B cell (primary cell): ENCODE measurements at regions of chr3 and their contacts with region 1.

Region 1: DNA sequence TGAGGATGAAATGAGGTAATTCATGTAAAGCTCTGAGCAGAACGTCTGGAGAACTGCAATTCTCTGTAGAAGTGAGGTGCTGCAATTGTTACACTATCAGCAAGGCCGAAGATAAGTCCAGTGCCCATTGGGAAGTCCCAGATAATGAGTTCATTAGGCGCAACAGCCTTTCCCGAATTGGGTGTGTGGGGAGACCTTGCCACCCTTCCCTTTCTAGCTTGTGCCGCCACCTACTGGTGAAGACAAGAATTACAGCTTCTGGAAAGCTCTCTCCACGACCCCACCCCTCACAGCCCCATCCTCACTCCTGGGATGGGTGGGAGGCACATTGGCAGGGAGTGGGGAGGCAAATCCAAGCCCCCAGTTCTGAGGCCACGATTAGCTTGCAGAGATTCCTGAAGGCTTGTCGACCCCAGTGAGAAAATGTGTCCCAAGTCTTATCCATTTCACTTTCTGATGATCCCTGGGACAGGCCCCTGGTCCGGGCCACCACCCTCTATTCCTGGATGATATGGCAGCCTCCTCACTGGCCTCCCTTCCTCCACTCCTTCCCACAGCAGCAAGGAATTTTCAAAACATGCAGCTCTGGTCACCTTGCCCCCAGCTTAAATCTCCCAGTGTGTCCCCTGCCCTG is 36.4 kb downstream of the FAM3D start:
- DNase-seq: peak; percentile 71
- ATAC-seq: peak; percentile 76
- H3K4me3 ChIP-seq: no peak overlapping the region
- H3K4me3 Mint-ChIP-seq: no peak overlapping the region
- H3K27ac ChIP-seq: no peak overlapping the region
- H3K27ac Mint-ChIP-seq: no peak overlapping the region
- H3K4me1 ChIP-seq: peaks cover 0 to 6% of the 10 kb centered on the region in 2 donors
- H3K4me1 Mint-ChIP-seq: no peaks in the 10 kb centered on the region
- H3K27me3 ChIP-seq: peaks cover 0 to 19% (median 0%) of the 10 kb centered on the region in 4 experiments
- H3K27me3 Mint-ChIP-seq: peaks cover 18% of the 10 kb centered on the region
- CTCF ChIP-seq: peak; percentile 92

Region 2: DNA sequence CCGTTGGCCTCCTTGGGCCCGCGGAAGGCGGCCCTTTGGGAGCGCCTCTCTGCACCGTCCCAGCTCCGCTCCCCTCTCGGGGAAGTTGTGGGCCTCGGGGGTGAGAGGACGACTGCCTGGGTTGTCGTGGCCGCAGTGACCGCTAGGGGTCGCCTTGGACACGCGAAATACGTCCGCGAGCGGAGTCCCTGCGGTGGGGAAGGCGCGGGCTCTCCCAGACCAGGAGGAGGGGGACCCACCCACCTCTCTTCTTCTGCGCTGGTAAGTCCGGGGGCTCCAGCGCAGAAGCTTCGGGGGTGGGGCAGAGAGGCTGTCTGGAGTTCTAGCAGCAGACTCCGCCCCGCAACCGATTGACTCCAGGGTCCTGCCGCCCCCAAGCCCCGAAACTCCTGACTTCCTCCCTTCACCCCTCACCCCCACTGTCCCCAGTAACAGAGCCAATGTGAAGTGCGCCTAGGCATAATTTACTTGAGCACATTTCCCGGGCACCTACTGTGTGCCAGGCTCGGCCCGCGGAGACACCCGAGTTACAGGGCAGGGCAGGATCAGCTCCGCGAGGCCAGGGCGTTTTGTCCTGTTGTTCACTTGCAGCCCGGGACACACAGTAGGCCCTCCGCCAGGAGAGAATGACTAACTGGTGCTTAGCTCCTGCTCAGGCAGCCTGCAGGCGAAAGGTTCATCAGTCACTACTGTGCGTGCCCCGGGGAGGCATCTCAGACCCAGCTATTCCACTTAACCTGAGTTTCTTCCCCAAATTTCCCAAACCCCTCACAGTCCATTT is 452.3 kb before region 1 on chr3:
- CTCF ChIA-PET with region 1: interaction called, 25 read pairs
- POLR2A ChIA-PET with region 1: no interaction called
- intact Hi-C with region 1: no loop called
- DNase-seq: peak; percentile 90
- ATAC-seq: peak; percentile 96
- H3K4me3 ChIP-seq: peak overlapping the region in 4 of 5 experiments; percentile 38 to 66 (median 56)
- H3K4me3 Mint-ChIP-seq: peak overlapping the region; percentile 86
- H3K27ac ChIP-seq: no peak overlapping the region
- H3K27ac Mint-ChIP-seq: peak overlapping the region; percentile 50
- H3K4me1 ChIP-seq: peaks cover 19 to 24% of the 10 kb centered on the region in 2 donors
- H3K4me1 Mint-ChIP-seq: peaks cover 27% of the 10 kb centered on the region
- H3K27me3 ChIP-seq: peaks cover 0 to 8% (median 3%) of the 10 kb centered on the region in 4 experiments
- H3K27me3 Mint-ChIP-seq: no peaks in the 10 kb centered on the region
- CTCF ChIP-seq: peak; percentile 88

Region 3: GRCh38 chr3:58532794-58533220 is 97.4 kb before region 1 on chr3:
- CTCF ChIA-PET with region 1: interaction called, 5 read pairs
- POLR2A ChIA-PET with region 1: no interaction called
- intact Hi-C with region 1: loop called (anchors 1 kb)
- DNase-seq: peak; percentile 89
- ATAC-seq: peak; percentile 99
- H3K4me3 ChIP-seq: no peak overlapping the region
- H3K4me3 Mint-ChIP-seq: no peak overlapping the region
- H3K27ac ChIP-seq: no peak overlapping the region
- H3K27ac Mint-ChIP-seq: peak overlapping the region; percentile 7
- H3K4me1 ChIP-seq: peaks cover 6 to 8% of the 10 kb centered on the region in 2 donors
- H3K4me1 Mint-ChIP-seq: peaks cover 6% of the 10 kb centered on the region
- H3K27me3 ChIP-seq: no peaks in the 10 kb centered on the region
- H3K27me3 Mint-ChIP-seq: no peaks in the 10 kb centered on the region
- CTCF ChIP-seq: peak; percentile 91

Region 4: DNA sequence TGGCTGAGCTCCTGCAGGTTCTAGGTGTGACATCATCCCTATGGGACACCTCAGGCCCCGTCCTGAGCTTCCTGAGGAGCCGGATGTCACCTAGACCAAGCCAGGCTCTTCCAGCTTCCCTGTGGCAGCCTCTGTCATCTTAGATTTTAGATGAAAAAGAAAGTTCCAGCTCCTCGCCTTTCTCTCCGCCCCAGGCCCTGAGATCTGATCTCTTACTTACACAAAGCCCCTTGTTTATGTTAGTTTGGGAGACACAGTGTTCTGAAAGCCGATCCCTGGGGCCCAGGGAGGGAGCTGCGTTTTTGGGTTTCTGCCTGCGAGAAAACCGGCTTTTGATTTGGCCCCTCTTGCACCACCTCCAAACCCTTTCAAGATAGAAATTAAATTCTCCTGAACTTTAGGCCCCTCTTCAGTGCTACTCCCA is 12.8 kb before region 1 on chr3:
- CTCF ChIA-PET with region 1: interaction called, 16 read pairs
- POLR2A ChIA-PET with region 1: no interaction called
- intact Hi-C with region 1: no loop called
- DNase-seq: no peak
- ATAC-seq: no peak
- H3K4me3 ChIP-seq: no peak overlapping the region
- H3K4me3 Mint-ChIP-seq: no peak overlapping the region
- H3K27ac ChIP-seq: no peak overlapping the region
- H3K27ac Mint-ChIP-seq: no peak overlapping the region
- H3K4me1 ChIP-seq: no peaks in the 10 kb centered on the region
- H3K4me1 Mint-ChIP-seq: no peaks in the 10 kb centered on the region
- H3K27me3 ChIP-seq: no peaks in the 10 kb centered on the region
- H3K27me3 Mint-ChIP-seq: peaks cover 3% of the 10 kb centered on the region
- CTCF ChIP-seq: no peak

Region 5: GRCh38 chr3:58651276-58651675 is 21.1 kb after region 1 on chr3:
- CTCF ChIA-PET with region 1: no interaction called
- POLR2A ChIA-PET with region 1: no interaction called
- intact Hi-C with region 1: no loop called
- DNase-seq: no peak
- ATAC-seq: no peak
- H3K4me3 ChIP-seq: no peak overlapping the region
- H3K4me3 Mint-ChIP-seq: no peak overlapping the region
- H3K27ac ChIP-seq: no peak overlapping the region
- H3K27ac Mint-ChIP-seq: no peak overlapping the region
- H3K4me1 ChIP-seq: no peaks in the 10 kb centered on the region
- H3K4me1 Mint-ChIP-seq: no peaks in the 10 kb centered on the region
- H3K27me3 ChIP-seq: no peaks in the 10 kb centered on the region
- H3K27me3 Mint-ChIP-seq: peaks cover 16% of the 10 kb centered on the region
- CTCF ChIP-seq: no peak

Region 6: DNA sequence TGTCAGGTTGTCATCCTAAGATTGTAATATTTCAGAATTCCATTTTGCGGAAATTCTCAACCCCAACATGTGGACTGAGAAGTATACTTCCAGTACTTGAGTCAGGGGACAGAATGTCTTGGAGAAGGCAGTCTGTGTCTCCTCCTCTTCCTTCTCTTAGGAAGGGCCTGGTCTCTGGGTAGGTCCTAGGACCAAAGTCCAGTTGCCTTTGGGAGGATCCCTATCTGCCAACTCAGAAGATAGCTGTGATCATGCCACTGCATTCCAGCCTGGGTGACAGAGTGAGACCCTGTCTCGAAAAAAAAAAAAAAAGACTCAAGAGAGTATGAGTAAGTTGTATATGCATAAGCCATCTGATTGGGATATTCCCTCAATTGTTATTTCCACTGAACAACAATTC is 60.3 kb after region 1 on chr3:
- CTCF ChIA-PET with region 1: interaction called, 3 read pairs
- POLR2A ChIA-PET with region 1: interaction called, 11 read pairs
- intact Hi-C with region 1: no loop called
- DNase-seq: no peak
- ATAC-seq: no peak
- H3K4me3 ChIP-seq: no peak overlapping the region
- H3K4me3 Mint-ChIP-seq: no peak overlapping the region
- H3K27ac ChIP-seq: no peak overlapping the region
- H3K27ac Mint-ChIP-seq: no peak overlapping the region
- H3K4me1 ChIP-seq: no peaks in the 10 kb centered on the region
- H3K4me1 Mint-ChIP-seq: no peaks in the 10 kb centered on the region
- H3K27me3 ChIP-seq: no peaks in the 10 kb centered on the region
- H3K27me3 Mint-ChIP-seq: peaks cover 15% of the 10 kb centered on the region
- CTCF ChIP-seq: no peak